K562 (cell line): ENCODE measurements at regions of chr22 and their contacts with region 1.

Region 1: GRCh38 chr22:29267858-29268417 is at the starts of genes EWSR1 and RHBDD3:
- DNase-seq: peak; percentile 81 to 96 (median 88)
- ATAC-seq: peak; percentile 85
- H3K4me3 ChIP-seq: peak within 1 kb of the TSS; percentile 91
- H3K27ac ChIP-seq: peak within 1 kb of the TSS; percentile 100
- H3K4me1 ChIP-seq: peaks cover 24 to 31% of the 10 kb centered on the region in 2 experiments; a peak in 4 of 5 replicates
- H3K27me3 ChIP-seq: no peaks in the 10 kb centered on the region
- CTCF ChIP-seq: peak in 1 of 3 experiments; percentile 0; a peak in 1 of 6 replicates
- EP300 ChIP-seq: peak; percentile 24
- POLR2A ChIP-seq: peak; percentile 90
- RAD21 ChIP-seq: no peak
- polyA plus RNA-seq, gene EWSR1: 83.3 to 101 TPM
- polyA plus RNA-seq, gene RHBDD3: 0.32 to 1.2 TPM

Region 2: GRCh38 chr22:28882878-28883656 is 384.9 kb before region 1 on chr22 and contains the start of gene ZNRF3:
- CTCF ChIA-PET with region 1: no interaction called
- POLR2A ChIA-PET with region 1: no interaction called
- in situ Hi-C with region 1: no loop called
- intact Hi-C with region 1: loop called (anchors 10 kb)
- DNase-seq: peak; percentile 89 to 92 (median 91)
- ATAC-seq: peak; percentile 92
- H3K4me3 ChIP-seq: peak within 1 kb of the TSS; percentile 56
- H3K27ac ChIP-seq: peak within 1 kb of the TSS; percentile 85
- H3K4me1 ChIP-seq: peaks cover 16 to 21% of the 10 kb centered on the region in 2 experiments; a peak in 4 of 5 replicates
- H3K27me3 ChIP-seq: no peaks in the 10 kb centered on the region
- CTCF ChIP-seq: no peak
- EP300 ChIP-seq: no peak
- POLR2A ChIP-seq: peak; percentile 87
- RAD21 ChIP-seq: no peak
- polyA plus RNA-seq, gene ZNRF3: 0.41 to 0.58 TPM

Region 3: DNA sequence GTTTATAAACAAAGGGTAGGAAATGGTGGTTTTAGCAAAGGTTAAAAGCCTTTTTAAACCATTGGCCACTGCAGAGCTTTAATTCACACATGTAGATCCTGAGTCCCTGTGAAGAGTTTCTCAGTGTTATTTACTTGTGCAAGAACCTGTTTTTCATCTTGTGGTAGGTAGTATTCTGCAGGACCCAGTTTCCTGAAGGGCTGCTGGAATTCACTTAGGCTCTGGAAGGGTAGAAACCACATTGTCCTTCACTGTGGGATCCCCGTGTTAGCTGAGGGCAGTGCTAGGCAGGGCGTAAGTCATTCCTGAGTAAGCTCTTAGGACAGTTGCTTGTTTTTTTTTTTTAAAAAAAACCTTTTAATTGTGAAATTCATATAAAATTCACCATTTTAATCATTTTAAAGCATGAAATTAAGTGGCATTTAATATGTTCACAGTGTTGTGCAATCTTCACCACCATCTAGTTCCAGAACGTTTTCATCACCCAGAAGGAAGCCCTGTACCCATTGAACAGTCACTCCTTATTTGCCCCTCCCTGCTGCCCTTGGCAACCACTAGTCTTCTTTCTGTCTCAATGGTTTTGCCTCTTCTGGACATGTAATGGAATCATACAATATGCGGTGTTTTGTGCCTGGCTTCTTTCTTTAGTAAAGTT is 284.0 kb before region 1 on chr22:
- CTCF ChIA-PET with region 1: no interaction called
- POLR2A ChIA-PET with region 1: no interaction called
- in situ Hi-C with region 1: no loop called
- intact Hi-C with region 1: no loop called
- DNase-seq: no peak
- ATAC-seq: no peak
- H3K4me3 ChIP-seq: no peak overlapping the region
- H3K27ac ChIP-seq: no peak overlapping the region
- H3K4me1 ChIP-seq: peaks cover 0 to 4% of the 10 kb centered on the region in 2 experiments; a peak in 2 of 5 replicates
- H3K27me3 ChIP-seq: no peaks in the 10 kb centered on the region
- CTCF ChIP-seq: no peak
- EP300 ChIP-seq: no peak
- POLR2A ChIP-seq: no peak
- RAD21 ChIP-seq: no peak

Region 4: GRCh38 chr22:29302681-29303465 is 34.9 kb after region 1 on chr22:
- CTCF ChIA-PET with region 1: no interaction called
- POLR2A ChIA-PET with region 1: interaction called, 10 read pairs
- in situ Hi-C with region 1: no loop called
- intact Hi-C with region 1: no loop called
- DNase-seq: no peak
- ATAC-seq: no peak
- H3K4me3 ChIP-seq: no peak overlapping the region
- H3K27ac ChIP-seq: peak overlapping the region; percentile 55; the same call in 2 of the 3 replicates
- H3K4me1 ChIP-seq: peaks cover 7 to 60% of the 10 kb centered on the region in 2 experiments
- H3K27me3 ChIP-seq: no peaks in the 10 kb centered on the region
- CTCF ChIP-seq: no peak
- EP300 ChIP-seq: no peak
- POLR2A ChIP-seq: no peak
- RAD21 ChIP-seq: no peak